ENCODE measurements at regions of chr3 and their contacts with region 1.

Region 1: DNA sequence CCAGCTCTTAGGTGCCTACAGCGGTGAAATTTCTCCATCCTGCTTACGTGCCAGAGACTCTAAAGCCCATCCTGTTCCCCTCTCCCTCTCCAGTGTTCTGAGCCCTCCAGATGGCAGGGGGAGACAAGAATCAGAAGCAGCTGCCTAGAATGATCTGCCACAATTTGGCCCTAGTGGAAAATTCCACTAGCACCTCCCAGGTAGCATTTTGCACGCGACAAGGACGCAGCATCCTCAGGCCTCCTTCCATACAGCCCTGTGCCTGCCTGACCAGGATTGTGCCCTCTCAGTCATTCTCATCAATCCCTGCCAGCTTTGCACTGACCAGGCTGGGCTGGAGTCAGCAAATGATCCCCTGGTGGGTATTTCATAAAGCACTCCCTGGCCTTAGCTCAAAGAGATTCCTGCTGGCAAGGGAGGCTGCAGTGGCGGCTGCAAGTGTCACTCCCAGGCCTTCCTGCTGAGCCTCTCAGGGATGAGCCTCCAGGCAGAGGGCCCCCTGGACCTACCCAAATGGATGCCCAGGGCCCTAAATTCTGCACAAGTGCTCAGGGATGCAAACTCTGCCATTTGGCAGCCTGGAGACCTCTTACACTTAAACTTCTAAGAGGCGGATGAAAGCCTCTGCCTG is 130.2 kb upstream of the ATP2B2 start:
- DNase-seq: no peak
- ATAC-seq: no peak
- H3K4me3 ChIP-seq: no peak overlapping the region
- H3K27ac ChIP-seq: no peak overlapping the region
- H3K4me1 ChIP-seq: no peaks in the 10 kb centered on the region
- H3K27me3 ChIP-seq: no peaks in the 10 kb centered on the region
- CTCF ChIP-seq: no peak

Region 2: GRCh38 chr3:10715886-10716285 is 80.3 kb after region 1 on chr3:
- intact Hi-C with region 1: loop called in 1 of 2 experiments (anchors 10 kb)
- DNase-seq: no peak
- ATAC-seq: no peak
- H3K4me3 ChIP-seq: no peak overlapping the region
- H3K27ac ChIP-seq: no peak overlapping the region
- H3K4me1 ChIP-seq: no peaks in the 10 kb centered on the region
- H3K27me3 ChIP-seq: peaks cover 0 to 14% (median 0%) of the 10 kb centered on the region in 3 donors
- CTCF ChIP-seq: no peak